Naive thymus-derived CD4-positive, alpha-beta T cell (primary cell): ENCODE measurements at regions of chr5 and their contacts with region 1.

Region 1: DNA sequence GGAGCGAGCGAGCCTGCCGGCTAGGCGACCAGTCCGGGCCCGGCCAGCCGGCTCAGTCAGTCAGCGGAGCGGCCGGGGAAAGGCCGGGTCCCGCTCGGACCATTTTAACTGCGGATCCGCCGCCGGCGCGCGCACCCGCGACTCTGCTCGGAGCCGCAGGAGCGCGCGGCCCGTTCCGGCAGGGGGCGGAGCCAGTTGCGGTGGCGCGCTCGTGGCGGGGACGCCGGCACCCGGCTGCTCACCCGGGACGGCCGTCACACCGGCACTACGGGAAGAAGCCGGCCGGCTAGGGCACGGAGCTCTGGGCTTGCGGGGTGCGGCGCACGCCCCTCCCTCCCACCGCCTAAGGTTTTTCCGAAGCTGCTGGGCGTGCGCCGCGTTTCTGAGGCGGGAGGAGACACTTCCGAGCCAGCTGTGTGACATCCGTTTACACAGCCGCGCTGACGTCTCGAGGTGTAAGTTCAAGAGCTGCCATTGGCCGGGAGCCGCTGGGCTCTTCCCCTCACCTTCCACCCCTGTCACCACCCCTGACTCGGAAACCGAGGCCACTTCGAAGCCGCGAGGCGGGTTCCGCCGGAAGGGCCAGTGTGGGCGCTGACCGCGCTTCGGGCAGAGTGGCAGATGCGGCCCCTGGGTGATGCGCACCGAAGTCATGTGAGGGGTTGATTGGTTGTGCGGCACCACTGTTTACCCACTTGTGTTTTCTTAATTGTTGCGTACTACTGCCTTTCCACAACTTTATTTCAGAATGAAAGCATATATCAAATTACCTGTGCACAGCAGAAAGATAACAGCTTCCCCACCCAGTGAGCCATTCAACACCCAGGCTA is at the start of gene FBXL17:
- DNase-seq: peak; percentile 86 to 95 (median 92)
- ATAC-seq: peak; percentile 89
- H3K4me3 ChIP-seq: peak within 1 kb of the TSS; percentile 90
- H3K4me3 Mint-ChIP-seq: peak within 1 kb of the TSS; percentile 80 to 99 (median 91)
- H3K27ac ChIP-seq: peak within 1 kb of the TSS; percentile 88
- H3K27ac Mint-ChIP-seq: peak within 1 kb of the TSS; percentile 90 to 99 (median 97)
- H3K4me1 ChIP-seq: peaks cover 8 to 17% of the 10 kb centered on the region in 2 donors
- H3K4me1 Mint-ChIP-seq: peaks cover 19 to 52% (median 44%) of the 10 kb centered on the region in 7 donors
- H3K27me3 ChIP-seq: no peaks in the 10 kb centered on the region
- H3K27me3 Mint-ChIP-seq: no peaks in the 10 kb centered on the region
- total RNA-seq, gene FBXL17: 14.2 to 28.4 (median 21.7) TPM

Region 2: GRCh38 chr5:107919969-107920368 is 462.2 kb before region 1 on chr5:
- CTCF ChIA-PET with region 1: no interaction called
- POLR2A ChIA-PET with region 1: no interaction called
- intact Hi-C with region 1: loop called in 1 of 2 experiments (anchors 5 kb)
- DNase-seq: no peak
- ATAC-seq: no peak
- H3K4me3 ChIP-seq: no peak overlapping the region
- H3K4me3 Mint-ChIP-seq: peak overlapping the region in 1 of 10 donors; percentile 13
- H3K27ac ChIP-seq: no peak overlapping the region
- H3K27ac Mint-ChIP-seq: peak overlapping the region in 1 of 9 donors; percentile 4
- H3K4me1 ChIP-seq: peaks cover 0 to 5% of the 10 kb centered on the region in 2 donors
- H3K4me1 Mint-ChIP-seq: peaks cover 4 to 54% (median 27%) of the 10 kb centered on the region in 7 donors
- H3K27me3 ChIP-seq: no peaks in the 10 kb centered on the region
- H3K27me3 Mint-ChIP-seq: no peaks in the 10 kb centered on the region

Region 3: DNA sequence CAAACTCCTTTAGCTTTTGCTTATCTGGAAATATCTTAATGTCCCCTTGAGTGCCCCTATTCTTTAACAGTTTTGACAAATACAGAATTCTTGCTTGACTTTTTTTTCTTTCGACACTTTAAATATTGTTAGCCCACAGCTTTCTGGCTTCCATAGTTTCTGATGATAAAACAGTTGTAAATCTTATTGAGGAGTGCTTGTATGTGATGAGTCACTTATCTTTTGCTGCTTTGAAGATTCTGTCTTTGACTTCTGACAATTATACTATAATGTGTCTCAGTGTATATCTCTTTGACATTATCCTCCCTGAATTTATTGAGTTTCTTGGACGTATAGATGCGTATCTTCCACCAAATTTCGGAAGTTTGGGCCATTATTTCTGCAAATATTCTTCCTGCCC is 21.9 kb before region 1 on chr5:
- CTCF ChIA-PET with region 1: no interaction called
- POLR2A ChIA-PET with region 1: interaction called, 12 read pairs
- intact Hi-C with region 1: loop called in 1 of 2 experiments (anchors 2 kb)
- DNase-seq: no peak
- ATAC-seq: no peak
- H3K4me3 ChIP-seq: no peak overlapping the region
- H3K4me3 Mint-ChIP-seq: no peak overlapping the region
- H3K27ac ChIP-seq: no peak overlapping the region
- H3K27ac Mint-ChIP-seq: peak overlapping the region in 1 of 9 donors; percentile 4
- H3K4me1 ChIP-seq: no peaks in the 10 kb centered on the region
- H3K4me1 Mint-ChIP-seq: peaks cover 0 to 21% (median 3%) of the 10 kb centered on the region in 7 donors
- H3K27me3 ChIP-seq: no peaks in the 10 kb centered on the region
- H3K27me3 Mint-ChIP-seq: no peaks in the 10 kb centered on the region

Region 4: GRCh38 chr5:108367679-108368334 is 14.4 kb before region 1 on chr5:
- CTCF ChIA-PET with region 1: no interaction called
- POLR2A ChIA-PET with region 1: interaction called, 3 read pairs
- intact Hi-C with region 1: loop called in 1 of 2 experiments (anchors 2 kb)
- DNase-seq: no peak
- ATAC-seq: no peak
- H3K4me3 ChIP-seq: no peak overlapping the region
- H3K4me3 Mint-ChIP-seq: no peak overlapping the region
- H3K27ac ChIP-seq: no peak overlapping the region
- H3K27ac Mint-ChIP-seq: peak overlapping the region in 1 of 9 donors; percentile 12
- H3K4me1 ChIP-seq: no peaks in the 10 kb centered on the region
- H3K4me1 Mint-ChIP-seq: peaks cover 5 to 57% (median 41%) of the 10 kb centered on the region in 7 donors
- H3K27me3 ChIP-seq: no peaks in the 10 kb centered on the region
- H3K27me3 Mint-ChIP-seq: no peaks in the 10 kb centered on the region

Region 5: GRCh38 chr5:109594217-109594616 is 1212.0 kb after region 1 on chr5:
- CTCF ChIA-PET with region 1: no interaction called
- POLR2A ChIA-PET with region 1: no interaction called
- intact Hi-C with region 1: no loop called
- DNase-seq: no peak
- ATAC-seq: no peak
- H3K4me3 ChIP-seq: no peak overlapping the region
- H3K4me3 Mint-ChIP-seq: no peak overlapping the region
- H3K27ac ChIP-seq: no peak overlapping the region
- H3K27ac Mint-ChIP-seq: no peak overlapping the region
- H3K4me1 ChIP-seq: no peaks in the 10 kb centered on the region
- H3K4me1 Mint-ChIP-seq: peaks cover 0 to 16% (median 10%) of the 10 kb centered on the region in 7 donors
- H3K27me3 ChIP-seq: no peaks in the 10 kb centered on the region
- H3K27me3 Mint-ChIP-seq: no peaks in the 10 kb centered on the region